PC-3 (cell line): ENCODE measurements at regions of chr5 and their contacts with region 1.

Region 1: GRCh38 chr5:53392073-53392472 is 88.4 kb upstream of the FST start:
- DNase-seq: no peak
- ATAC-seq: no peak
- H3K4me3 ChIP-seq: no peak overlapping the region
- H3K27ac ChIP-seq: no peak overlapping the region
- H3K4me1 ChIP-seq: no peaks in the 10 kb centered on the region
- H3K27me3 ChIP-seq: no peaks in the 10 kb centered on the region
- CTCF ChIP-seq: no peak

Region 2: DNA sequence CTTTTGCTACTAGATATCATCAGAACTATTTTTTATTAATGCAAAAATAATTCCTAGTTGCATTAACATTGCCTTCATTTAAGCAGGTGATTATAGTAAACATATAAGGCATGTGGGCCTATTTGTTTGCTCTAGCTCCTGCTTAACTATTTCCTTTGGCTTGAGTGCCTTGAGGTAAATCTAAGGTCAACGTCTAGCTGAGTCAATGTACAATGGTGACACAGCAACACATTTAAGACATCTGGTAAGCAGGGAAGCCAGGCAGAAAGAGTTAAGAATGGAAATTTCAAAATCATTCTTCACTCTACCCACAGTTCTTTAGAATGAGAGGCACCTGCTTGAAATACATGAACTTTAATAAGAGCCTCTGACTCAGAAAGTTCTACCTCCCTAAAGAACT is 23.6 kb before region 1 on chr5:
- CTCF ChIA-PET with region 1: no interaction called
- POLR2A ChIA-PET with region 1: interaction called, 3 read pairs
- intact Hi-C with region 1: loop called (anchors 2 kb)
- DNase-seq: peak; percentile 73
- ATAC-seq: peak; percentile 39
- H3K4me3 ChIP-seq: no peak overlapping the region
- H3K27ac ChIP-seq: peak overlapping the region; percentile 100
- H3K4me1 ChIP-seq: peaks cover 59% of the 10 kb centered on the region
- H3K27me3 ChIP-seq: no peaks in the 10 kb centered on the region
- CTCF ChIP-seq: no peak

Region 3: DNA sequence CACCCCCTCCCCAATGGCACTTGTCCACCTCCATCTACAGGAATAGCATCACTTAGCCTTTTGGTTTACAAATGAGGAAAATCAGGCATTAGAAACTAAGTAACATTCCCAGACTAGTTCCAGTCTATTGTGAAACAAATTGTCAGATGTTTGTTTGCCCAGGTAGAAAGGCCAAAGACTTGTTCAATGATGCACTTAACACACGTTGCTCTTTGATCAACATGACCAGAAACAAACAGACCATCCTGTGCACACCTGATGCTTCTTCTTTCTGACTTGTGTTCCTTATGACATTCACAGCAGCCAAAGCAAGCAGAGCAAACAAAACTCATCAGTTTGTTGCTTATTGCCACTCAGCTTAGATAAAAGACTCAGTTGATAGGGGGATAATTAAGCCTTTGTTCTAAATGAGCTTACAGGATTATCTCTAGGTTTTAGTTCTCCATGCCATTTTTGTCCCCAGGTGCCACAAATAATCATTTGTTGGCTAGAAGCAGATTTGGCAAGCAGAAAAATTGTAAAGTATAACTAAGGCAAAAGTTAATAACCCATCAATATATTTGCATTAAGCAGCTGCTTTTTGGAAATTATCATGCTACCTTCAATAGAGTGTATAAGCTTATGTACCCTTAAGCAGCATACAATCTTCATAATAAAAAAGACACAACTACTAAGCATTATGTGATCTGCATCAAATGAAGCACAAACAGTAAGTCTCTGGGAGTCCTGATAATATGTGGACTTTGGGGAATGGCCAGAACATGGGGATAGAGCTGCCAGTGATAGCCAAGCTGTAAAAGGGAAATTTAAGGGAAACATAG is 62.0 kb after region 1 on chr5:
- CTCF ChIA-PET with region 1: no interaction called
- POLR2A ChIA-PET with region 1: no interaction called
- intact Hi-C with region 1: no loop called
- DNase-seq: no peak
- ATAC-seq: no peak
- H3K4me3 ChIP-seq: no peak overlapping the region
- H3K27ac ChIP-seq: no peak overlapping the region
- H3K4me1 ChIP-seq: no peaks in the 10 kb centered on the region
- H3K27me3 ChIP-seq: no peaks in the 10 kb centered on the region
- CTCF ChIP-seq: no peak